ENCODE measurements at regions of chr10 and their contacts with region 1.

Region 1: GRCh38 chr10:49592726-49593563 is 17.2 kb upstream of the SLC18A3 start:
- DNase-seq: peak; percentile 67
- H3K4me3 Mint-ChIP-seq: no peak overlapping the region
- H3K27ac Mint-ChIP-seq: no peak overlapping the region
- H3K4me1 Mint-ChIP-seq: no peaks in the 10 kb centered on the region
- H3K27me3 Mint-ChIP-seq: peaks cover 21% of the 10 kb centered on the region

Region 2: DNA sequence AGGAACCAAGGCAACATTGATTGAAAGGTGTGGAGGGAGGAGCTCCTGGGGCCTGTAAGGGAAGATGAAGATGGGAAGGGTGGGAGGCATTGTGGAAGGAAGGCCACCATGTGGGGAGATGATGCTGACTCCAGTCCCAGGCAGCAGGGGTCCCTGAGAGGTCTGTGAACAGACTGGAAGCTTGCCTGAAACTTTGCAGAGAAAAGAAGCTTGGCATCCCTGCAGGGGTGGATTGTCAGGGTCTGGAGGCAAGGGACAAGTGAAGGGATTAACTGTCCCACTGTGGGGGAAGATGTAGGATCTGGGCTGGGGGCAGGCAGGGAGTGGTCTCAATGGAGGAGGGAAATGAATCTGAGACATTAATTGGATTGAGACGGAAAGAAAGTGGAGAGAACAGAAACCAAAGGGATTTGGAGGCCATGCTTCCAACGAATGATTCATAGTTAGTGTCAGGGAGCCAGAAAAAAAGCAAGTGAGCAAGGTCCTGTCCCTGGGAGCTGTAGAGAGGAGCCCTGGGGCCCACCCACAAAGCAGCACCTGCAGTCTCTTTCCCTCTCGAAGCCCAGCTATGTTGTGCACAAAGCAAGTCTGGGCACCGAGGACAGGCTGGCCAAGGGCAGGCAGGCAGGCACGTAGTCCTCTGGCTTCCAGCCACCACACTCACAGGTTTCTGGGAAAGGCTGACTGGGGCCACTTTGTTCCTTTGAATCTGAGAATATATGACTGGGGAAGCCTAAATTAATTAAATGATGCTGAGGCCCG is 12.4 kb after region 1 on chr10:
- CTCF ChIA-PET with region 1: interaction called, 12 read pairs
- DNase-seq: no peak
- H3K4me3 Mint-ChIP-seq: no peak overlapping the region
- H3K27ac Mint-ChIP-seq: no peak overlapping the region
- H3K4me1 Mint-ChIP-seq: peaks cover 3% of the 10 kb centered on the region
- H3K27me3 Mint-ChIP-seq: peaks cover 50% of the 10 kb centered on the region

Region 3: DNA sequence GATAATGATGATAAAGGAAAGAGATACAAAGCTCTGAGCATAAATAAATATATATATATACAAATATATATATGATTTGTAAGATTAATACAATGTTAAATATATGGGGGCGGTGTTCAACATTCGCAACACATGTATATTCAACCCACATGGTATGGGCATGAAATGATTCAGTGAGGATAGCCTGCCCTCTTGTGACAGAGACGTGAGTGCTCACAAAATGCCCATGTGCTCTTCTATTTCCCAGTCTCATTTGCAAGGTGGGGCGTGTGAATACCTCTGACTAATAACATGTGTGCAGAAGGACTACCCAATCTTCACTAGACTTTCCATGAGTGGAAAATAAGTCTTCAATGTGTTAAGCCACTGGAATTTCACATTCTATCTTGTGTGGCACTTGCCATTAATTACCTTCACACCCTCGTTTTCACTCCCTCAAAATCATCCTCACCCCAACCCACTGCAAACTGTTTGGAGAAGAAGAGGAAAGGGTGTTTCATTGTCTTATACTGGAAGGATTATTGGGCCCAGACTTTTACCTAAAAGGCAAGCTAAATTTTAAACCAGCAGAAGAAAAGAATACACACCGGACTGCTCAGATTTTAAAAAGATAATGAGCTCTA is 631.5 kb after region 1 on chr10:
- CTCF ChIA-PET with region 1: interaction called, 33 read pairs
- DNase-seq: peak; percentile 34
- H3K4me3 Mint-ChIP-seq: no peak overlapping the region
- H3K27ac Mint-ChIP-seq: no peak overlapping the region
- H3K4me1 Mint-ChIP-seq: no peaks in the 10 kb centered on the region
- H3K27me3 Mint-ChIP-seq: peaks cover 23% of the 10 kb centered on the region

Measured in activated naive CD4-positive, alpha-beta T cell treated with anti-CD3 and anti-CD28 coated beads, Interleukin-2, amount 10 ng/mL, durations not matched to agents 7 days and 5 days (primary cell).